ENCODE measurements at regions of chr1 and their contacts with region 1.

Region 1: DNA sequence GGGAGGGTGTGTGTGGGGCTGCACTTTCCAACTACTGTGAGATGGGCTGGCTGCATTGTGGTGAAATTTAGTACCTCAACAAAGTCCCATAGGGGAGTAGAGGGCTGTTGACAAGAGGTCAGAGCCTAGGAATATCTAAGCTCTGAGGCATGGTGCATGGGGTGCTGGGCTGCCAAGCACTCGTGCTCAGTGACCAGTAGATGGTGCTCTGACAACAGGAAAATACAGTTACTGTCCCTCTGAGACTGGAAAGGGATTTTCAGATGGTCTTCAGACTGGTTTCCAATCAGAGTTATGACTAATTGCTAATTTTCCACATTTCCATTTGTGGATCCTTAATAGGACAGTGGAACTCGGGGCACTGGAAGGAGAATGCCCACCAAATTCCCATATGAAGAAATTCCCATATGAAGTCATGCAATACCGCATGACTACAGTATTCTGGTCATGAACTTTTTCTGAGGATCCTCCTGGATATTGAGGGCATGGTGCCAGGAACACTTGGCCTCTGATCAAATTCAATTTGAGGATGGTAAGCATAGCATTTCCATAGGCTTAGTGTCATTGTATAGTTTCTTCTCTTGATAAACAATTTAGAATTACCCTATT is 4.1 kb upstream of the CACNA1E start:
- ATAC-seq: peak; percentile 52 to 92 (median 71)
- H3K4me3 ChIP-seq: no peak overlapping the region
- H3K27ac ChIP-seq: no peak overlapping the region
- H3K4me1 ChIP-seq: peaks cover 0 to 4% of the 10 kb centered on the region in 2 donors

Region 2: GRCh38 chr1:181152892-181153633 is 326.2 kb before region 1 on chr1:
- in situ Hi-C with region 1: no loop called
- ATAC-seq: peak; percentile 48 to 85 (median 66)
- H3K4me3 ChIP-seq: no peak overlapping the region
- H3K27ac ChIP-seq: no peak overlapping the region
- H3K4me1 ChIP-seq: peaks cover 11 to 14% of the 10 kb centered on the region in 2 donors

Region 3: DNA sequence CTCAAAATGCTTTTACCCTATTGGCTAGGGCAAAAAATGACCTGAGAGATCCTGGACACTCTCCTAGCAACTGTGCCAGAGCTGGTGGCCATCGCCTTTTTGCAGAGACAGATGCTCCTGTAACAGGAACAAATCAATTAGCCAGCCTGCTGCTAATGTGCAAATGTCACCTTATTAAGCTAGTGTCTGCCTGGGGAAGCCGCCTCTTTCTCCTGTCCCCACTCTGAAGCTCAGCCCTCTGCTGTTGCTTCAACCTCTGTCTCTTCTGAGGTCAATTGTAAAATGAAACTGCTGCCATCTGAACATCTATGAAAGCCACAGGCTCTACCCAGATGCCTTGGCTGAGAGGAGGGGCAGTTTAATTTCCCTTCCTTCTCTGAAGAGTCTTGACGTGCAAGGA is 81.4 kb before region 1 on chr1:
- in situ Hi-C with region 1: loop called in 1 of 9 experiments (anchors 25 kb)
- ATAC-seq: peak in 2 of 8 experiments; percentile 26 to 43
- H3K4me3 ChIP-seq: no peak overlapping the region
- H3K27ac ChIP-seq: no peak overlapping the region
- H3K4me1 ChIP-seq: no peaks in the 10 kb centered on the region

Region 4: DNA sequence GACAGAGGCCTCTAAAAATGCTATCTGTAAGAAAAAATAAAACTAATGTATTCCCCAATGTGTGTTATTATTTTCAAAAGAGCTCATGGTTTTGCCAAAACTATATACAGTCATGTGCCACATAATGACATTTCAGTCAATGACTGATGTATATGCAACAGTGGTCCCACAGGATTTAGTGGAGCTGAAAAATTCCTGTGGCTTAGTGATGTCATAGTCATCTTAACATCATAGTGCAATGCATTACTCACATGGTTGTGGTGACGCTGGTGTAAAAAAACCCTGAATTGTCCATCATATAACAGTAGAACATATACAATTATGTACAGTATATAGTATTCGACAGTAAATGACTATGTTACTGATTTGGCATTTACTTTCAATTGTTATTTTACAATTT is 176.5 kb after region 1 on chr1:
- in situ Hi-C with region 1: no loop called
- ATAC-seq: peak in 2 of 8 experiments; percentile 26 to 69
- H3K4me3 ChIP-seq: no peak overlapping the region
- H3K27ac ChIP-seq: no peak overlapping the region
- H3K4me1 ChIP-seq: peaks cover 0 to 16% of the 10 kb centered on the region in 2 donors

Region 5: GRCh38 chr1:181936768-181937581 is 457.7 kb after region 1 on chr1:
- in situ Hi-C with region 1: loop called in 8 of 9 experiments (anchors 10 to 25 kb)
- ATAC-seq: peak; percentile 47 to 85 (median 68)
- H3K4me3 ChIP-seq: no peak overlapping the region
- H3K27ac ChIP-seq: no peak overlapping the region
- H3K4me1 ChIP-seq: no peaks in the 10 kb centered on the region

Region 6: GRCh38 chr1:182069028-182069466 is 589.8 kb after region 1 on chr1:
- in situ Hi-C with region 1: loop called in 1 of 9 experiments (anchors 25 kb)
- ATAC-seq: peak; percentile 70 to 100 (median 98)
- H3K4me3 ChIP-seq: no peak overlapping the region
- H3K27ac ChIP-seq: no peak overlapping the region
- H3K4me1 ChIP-seq: peaks cover 0 to 2% of the 10 kb centered on the region in 2 donors

Region 7: GRCh38 chr1:182113879-182114626 is 634.8 kb after region 1 on chr1:
- in situ Hi-C with region 1: no loop called
- ATAC-seq: peak in 5 of 8 experiments; percentile 85 to 95 (median 91)
- H3K4me3 ChIP-seq: no peak overlapping the region
- H3K27ac ChIP-seq: peak overlapping the region in 1 of 2 donors; percentile 32
- H3K4me1 ChIP-seq: peaks cover 6 to 9% of the 10 kb centered on the region in 2 donors

Region 8: DNA sequence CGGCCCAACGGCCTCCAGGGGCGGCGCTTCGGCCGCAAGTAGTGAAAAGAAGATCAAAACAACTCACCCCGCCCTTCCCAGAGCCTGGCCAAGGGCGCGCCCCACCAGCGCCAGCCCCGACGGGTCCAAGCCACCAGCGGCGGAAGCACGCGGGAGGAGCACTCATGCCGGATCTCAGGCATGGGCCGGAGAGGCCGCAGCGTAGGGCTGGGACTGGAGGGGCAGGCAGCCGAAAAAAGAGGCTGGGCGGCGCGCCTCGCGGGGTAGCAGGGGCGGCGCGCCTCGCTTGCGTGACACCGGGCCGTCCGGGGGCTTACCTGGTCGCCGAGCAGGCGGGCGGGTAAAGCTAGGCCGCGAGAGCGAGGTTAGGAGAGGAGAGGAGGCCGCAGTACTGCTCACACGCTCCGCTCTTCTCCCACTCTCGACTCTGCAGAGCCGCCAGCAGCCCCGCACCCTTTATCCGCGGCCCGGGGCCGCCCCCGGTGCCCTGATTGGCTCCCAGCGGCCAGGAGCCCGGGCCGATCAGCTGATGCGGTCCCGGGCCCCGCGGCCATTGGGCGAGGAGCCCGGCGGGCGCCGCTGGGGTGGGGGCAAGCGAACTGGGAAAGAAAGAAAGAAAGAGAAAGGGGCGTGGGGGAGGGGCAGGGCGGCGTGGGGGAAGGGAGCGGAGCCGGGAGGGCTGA is 912.3 kb after region 1 on chr1 and contains the start of gene GLUL:
- in situ Hi-C with region 1: loop called in 1 of 9 experiments (anchors 10 kb)
- ATAC-seq: peak; percentile 84 to 94 (median 91)
- H3K4me3 ChIP-seq: peak within 1 kb of the TSS; percentile 84 to 98 (median 94)
- H3K27ac ChIP-seq: peak within 1 kb of the TSS; percentile 92
- H3K4me1 ChIP-seq: peaks cover 7 to 20% of the 10 kb centered on the region in 2 donors
- total RNA-seq, gene GLUL: 49.0 to 392 (median 167) TPM

Measured in motor neuron (in vitro differentiated cells).